ENCODE measurements at regions of chr9 and their contacts with region 1.

Region 1: GRCh38 chr9:126556560-126557250 is 57.0 kb upstream of the LMX1B start:
- DNase-seq: no peak

Region 2: DNA sequence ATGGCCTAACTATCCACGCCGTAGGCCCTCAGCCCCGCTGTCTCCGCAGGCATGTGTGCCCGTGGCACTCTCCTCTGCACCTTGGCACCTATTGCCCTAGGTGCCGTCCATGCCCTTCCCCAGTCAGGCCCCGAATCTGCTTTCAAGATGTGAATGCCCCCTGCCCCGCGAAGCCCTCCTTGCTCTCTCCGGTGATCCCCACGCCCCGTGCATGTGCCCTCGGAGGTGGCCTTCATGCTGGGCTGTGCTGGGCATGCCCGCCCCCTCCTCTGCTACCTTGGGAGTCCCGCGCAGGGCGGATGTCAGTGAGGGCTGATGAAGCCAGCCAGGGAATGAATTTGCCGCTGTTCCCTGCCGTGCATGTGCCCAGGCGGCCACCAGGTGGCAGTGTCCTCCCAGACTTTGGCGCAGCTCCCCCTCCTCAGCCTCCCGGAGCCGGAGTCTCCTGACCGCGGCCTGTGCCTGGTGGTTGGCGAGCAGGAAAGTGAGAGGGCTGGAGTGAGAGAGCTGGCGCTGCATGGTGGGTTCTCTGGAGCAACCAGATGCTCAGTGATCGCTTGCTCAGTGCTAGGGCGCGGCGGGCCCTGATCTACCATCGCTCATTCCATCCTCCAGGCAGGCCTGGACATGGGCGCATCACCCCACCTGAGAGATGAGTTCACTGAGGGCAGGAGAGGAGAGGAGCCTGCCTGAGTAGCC is 55.9 kb before region 1 on chr9:
- intact Hi-C with region 1: loop called (anchors 2 kb)
- DNase-seq: peak; percentile 69 to 94 (median 88)